ENCODE measurements at regions of chr11 and their contacts with region 1.

Region 1: DNA sequence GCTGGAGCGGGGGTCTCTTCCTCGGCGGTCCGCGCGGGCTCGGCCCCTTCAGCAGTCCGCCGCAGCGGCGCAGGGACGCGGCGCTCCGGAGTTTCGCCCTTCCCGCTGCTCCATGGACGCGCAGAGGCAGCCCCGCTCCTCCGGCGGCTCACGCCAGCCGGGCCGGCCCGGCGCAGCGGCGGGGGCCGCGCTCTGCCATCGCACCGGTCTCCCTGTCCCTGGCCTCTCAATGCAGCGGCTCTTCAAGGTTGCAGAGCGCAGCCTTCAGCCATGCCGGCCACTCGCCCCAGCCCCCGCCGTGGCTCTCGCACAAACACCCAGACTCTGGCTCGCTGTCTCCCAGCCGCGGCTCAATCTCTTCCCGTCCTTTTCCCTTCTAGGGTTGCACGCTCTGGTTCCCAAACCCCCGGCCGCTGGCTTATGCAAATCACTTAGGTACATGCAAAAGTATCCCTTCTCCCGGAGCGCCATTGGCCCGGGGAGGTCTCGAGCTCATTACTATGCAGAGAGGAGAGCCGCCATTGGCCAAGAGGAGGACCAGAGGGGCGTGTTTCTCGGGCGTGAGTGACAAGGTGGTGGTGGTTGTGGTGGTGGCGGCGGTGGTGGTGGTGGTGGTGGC is at the start of gene LGR4:
- DNase-seq: peak; percentile 96 to 97
- H3K4me3 ChIP-seq: peak within 1 kb of the TSS; percentile 73 to 88
- H3K27ac ChIP-seq: peak within 1 kb of the TSS; percentile 77 to 85
- H3K4me1 ChIP-seq: peaks cover 0 to 44% (median 20%) of the 10 kb centered on the region in 4 donors
- H3K27me3 ChIP-seq: no peaks in the 10 kb centered on the region
- CTCF ChIP-seq: no peak

Region 2: DNA sequence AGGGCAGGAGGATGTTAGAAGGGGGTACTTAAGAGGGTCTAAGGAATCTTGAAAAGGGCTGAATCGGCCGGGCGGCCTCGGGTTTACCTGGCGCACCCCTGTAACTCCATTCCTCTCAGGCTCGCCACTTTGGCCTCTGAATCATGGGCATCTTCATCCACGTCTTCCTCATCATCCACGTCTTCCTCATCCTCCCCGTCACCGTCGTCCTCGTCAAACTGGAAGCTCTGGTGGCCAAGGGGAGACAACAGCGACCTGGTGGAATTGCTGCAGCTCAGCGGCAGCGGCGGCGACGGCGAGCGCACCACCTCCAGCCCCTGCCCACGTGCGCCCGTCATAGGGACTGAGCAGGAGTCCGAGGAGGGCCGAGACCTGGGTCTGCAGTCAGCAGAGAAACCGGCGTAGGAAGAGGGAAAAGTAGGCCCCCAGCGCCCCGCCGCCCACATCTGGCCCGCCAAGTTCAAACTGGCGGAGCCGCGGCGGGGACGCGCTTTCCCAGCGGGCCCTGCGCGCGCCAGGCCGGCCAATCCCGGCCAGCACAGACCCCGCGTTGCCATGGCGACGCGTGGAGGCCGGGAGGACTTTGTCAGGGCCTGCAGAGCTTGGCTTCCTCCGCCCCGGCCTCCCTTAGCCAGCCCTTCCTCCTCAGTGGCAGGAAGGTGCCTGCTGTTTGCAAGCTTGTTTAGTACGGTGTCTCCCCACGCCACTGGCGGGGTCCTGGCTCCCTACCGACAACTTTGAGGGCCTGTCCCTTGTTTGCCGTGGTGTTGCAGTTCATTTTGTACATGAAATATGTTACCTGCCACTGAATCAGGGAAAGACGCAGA is 109.5 kb before region 1 on chr11 and contains the start of gene CCDC34:
- intact Hi-C with region 1: loop called (anchors 10 kb)
- DNase-seq: peak; percentile 87 to 91
- H3K4me3 ChIP-seq: peak within 1 kb of the TSS; percentile 75 to 90
- H3K27ac ChIP-seq: peak within 1 kb of the TSS; percentile 49 to 67
- H3K4me1 ChIP-seq: peaks cover 0 to 18% (median 10%) of the 10 kb centered on the region in 4 donors
- H3K27me3 ChIP-seq: no peaks in the 10 kb centered on the region
- CTCF ChIP-seq: no peak

Region 3: GRCh38 chr11:27385245-27385644 is 87.3 kb before region 1 on chr11:
- intact Hi-C with region 1: loop called (anchors 10 kb)
- DNase-seq: peak in 1 of 2 donors; percentile 24
- H3K4me3 ChIP-seq: peak overlapping the region; percentile 35 to 36
- H3K27ac ChIP-seq: peak overlapping the region; percentile 64 to 70
- H3K4me1 ChIP-seq: peaks cover 0 to 35% (median 8%) of the 10 kb centered on the region in 4 donors
- H3K27me3 ChIP-seq: no peaks in the 10 kb centered on the region
- CTCF ChIP-seq: no peak

Region 4: DNA sequence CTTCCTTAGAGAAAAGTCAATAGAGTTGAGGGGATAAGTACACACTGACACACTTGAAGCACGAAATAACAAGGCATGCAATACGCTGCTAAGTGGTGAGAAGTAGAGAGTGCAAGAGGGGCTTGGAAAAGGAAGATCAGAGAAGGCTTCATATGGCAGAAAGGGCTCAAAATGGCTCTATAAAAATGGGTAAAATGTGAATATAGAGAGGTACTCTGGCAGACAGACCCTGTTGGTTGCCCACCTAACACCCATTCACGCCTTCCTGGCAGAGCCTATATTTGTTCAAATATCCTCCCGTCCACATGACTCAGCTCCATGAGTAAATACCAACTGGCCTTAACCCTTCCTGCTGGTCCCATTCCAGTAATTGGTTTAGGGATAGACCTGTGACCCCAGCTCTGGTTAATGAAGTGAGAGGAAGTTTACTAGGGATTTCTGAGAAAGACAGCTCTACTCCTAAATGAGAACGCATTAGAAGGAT is 70.6 kb before region 1 on chr11:
- intact Hi-C with region 1: loop called (anchors 10 kb)
- DNase-seq: no peak
- H3K4me3 ChIP-seq: no peak overlapping the region
- H3K27ac ChIP-seq: no peak overlapping the region
- H3K4me1 ChIP-seq: peaks cover 0 to 34% (median 24%) of the 10 kb centered on the region in 4 donors
- H3K27me3 ChIP-seq: no peaks in the 10 kb centered on the region
- CTCF ChIP-seq: no peak